ENCODE measurements at regions of chr3 and their contacts with region 1.

Region 1: DNA sequence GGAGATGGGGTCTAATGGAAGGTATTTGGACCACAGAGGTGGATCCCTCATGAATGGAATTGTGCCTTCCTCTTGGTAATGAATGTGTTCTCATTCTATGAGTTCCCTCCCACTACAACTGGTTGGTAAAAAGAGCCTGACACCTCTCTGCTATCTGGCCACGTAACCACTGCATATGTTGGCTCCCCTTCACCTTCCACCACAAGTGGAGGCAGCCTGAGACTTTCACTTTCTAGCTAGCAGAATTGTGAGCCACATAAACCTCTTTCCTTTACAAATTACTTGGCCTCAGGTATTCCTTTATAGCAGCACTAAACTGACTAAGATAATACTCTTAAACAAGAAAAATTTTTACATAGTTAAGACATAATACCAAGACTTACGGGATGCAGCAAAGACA is 155.3 kb downstream of the NR1I2 start:
- DNase-seq: peak in 3 of 9 donors; percentile 8 to 49 (median 12)
- ATAC-seq: peak; percentile 73
- H3K4me3 ChIP-seq: no peak overlapping the region
- H3K4me3 Mint-ChIP-seq: peak overlapping the region; percentile 21 to 84 (median 42)
- H3K27ac ChIP-seq: no peak overlapping the region
- H3K27ac Mint-ChIP-seq: peak overlapping the region; percentile 4 to 83 (median 37)
- H3K4me1 ChIP-seq: peaks cover 0 to 11% of the 10 kb centered on the region in 2 donors
- H3K4me1 Mint-ChIP-seq: peaks cover 19 to 78% (median 68%) of the 10 kb centered on the region in 7 donors
- H3K27me3 ChIP-seq: no peaks in the 10 kb centered on the region
- H3K27me3 Mint-ChIP-seq: no peaks in the 10 kb centered on the region

Region 2: GRCh38 chr3:119912220-119912619 is 25.0 kb before region 1 on chr3:
- CTCF ChIA-PET with region 1: no interaction called
- POLR2A ChIA-PET with region 1: no interaction called
- intact Hi-C with region 1: loop called in 1 of 2 experiments (anchors 1 kb)
- DNase-seq: no peak
- ATAC-seq: peak; percentile 22
- H3K4me3 ChIP-seq: no peak overlapping the region
- H3K4me3 Mint-ChIP-seq: peak overlapping the region in 9 of 10 donors; percentile 2 to 58 (median 47)
- H3K27ac ChIP-seq: no peak overlapping the region
- H3K27ac Mint-ChIP-seq: peak overlapping the region in 7 of 9 donors; percentile 26 to 77 (median 41)
- H3K4me1 ChIP-seq: peaks cover 7 to 17% of the 10 kb centered on the region in 2 donors
- H3K4me1 Mint-ChIP-seq: peaks cover 10 to 46% (median 33%) of the 10 kb centered on the region in 7 donors
- H3K27me3 ChIP-seq: no peaks in the 10 kb centered on the region
- H3K27me3 Mint-ChIP-seq: no peaks in the 10 kb centered on the region

Region 3: GRCh38 chr3:120021523-120021922 is 84.3 kb after region 1 on chr3:
- CTCF ChIA-PET with region 1: no interaction called
- POLR2A ChIA-PET with region 1: no interaction called
- intact Hi-C with region 1: no loop called
- DNase-seq: no peak
- ATAC-seq: no peak
- H3K4me3 ChIP-seq: no peak overlapping the region
- H3K4me3 Mint-ChIP-seq: peak overlapping the region in 1 of 10 donors; percentile 57
- H3K27ac ChIP-seq: no peak overlapping the region
- H3K27ac Mint-ChIP-seq: peak overlapping the region in 2 of 9 donors; percentile 7 to 40
- H3K4me1 ChIP-seq: peaks cover 3 to 5% of the 10 kb centered on the region in 2 donors
- H3K4me1 Mint-ChIP-seq: peaks cover 47 to 91% (median 89%) of the 10 kb centered on the region in 7 donors
- H3K27me3 ChIP-seq: no peaks in the 10 kb centered on the region
- H3K27me3 Mint-ChIP-seq: no peaks in the 10 kb centered on the region

Region 4: DNA sequence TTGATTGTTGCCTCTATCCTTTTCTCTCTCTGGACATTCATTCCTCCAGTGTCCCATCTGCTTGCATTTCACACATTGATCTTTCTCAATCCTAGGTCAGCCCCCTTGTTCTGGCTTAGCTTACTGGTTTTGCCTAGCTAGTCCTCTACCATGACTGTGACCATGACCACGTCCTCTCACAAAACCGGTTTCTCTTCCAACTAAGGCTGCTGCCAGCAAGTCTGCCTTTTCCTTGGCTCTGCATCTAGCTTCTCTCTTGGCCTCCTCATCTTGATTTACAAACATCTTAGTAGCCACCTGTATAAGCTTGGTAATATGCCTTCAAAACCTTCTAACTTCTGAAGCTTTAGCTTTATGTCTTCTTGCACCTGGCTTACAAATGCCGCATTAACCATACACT is 1138.0 kb after region 1 on chr3:
- CTCF ChIA-PET with region 1: no interaction called
- POLR2A ChIA-PET with region 1: no interaction called
- intact Hi-C with region 1: no loop called
- DNase-seq: no peak
- ATAC-seq: no peak
- H3K4me3 ChIP-seq: no peak overlapping the region
- H3K4me3 Mint-ChIP-seq: no peak overlapping the region
- H3K27ac ChIP-seq: no peak overlapping the region
- H3K27ac Mint-ChIP-seq: no peak overlapping the region
- H3K4me1 ChIP-seq: no peaks in the 10 kb centered on the region
- H3K4me1 Mint-ChIP-seq: peaks cover 0 to 1% (median 0%) of the 10 kb centered on the region in 7 donors
- H3K27me3 ChIP-seq: no peaks in the 10 kb centered on the region
- H3K27me3 Mint-ChIP-seq: no peaks in the 10 kb centered on the region

Measured in naive thymus-derived CD4-positive, alpha-beta T cell (primary cell).